ENCODE measurements at regions of chrX and their contacts with region 1.

Region 1: DNA sequence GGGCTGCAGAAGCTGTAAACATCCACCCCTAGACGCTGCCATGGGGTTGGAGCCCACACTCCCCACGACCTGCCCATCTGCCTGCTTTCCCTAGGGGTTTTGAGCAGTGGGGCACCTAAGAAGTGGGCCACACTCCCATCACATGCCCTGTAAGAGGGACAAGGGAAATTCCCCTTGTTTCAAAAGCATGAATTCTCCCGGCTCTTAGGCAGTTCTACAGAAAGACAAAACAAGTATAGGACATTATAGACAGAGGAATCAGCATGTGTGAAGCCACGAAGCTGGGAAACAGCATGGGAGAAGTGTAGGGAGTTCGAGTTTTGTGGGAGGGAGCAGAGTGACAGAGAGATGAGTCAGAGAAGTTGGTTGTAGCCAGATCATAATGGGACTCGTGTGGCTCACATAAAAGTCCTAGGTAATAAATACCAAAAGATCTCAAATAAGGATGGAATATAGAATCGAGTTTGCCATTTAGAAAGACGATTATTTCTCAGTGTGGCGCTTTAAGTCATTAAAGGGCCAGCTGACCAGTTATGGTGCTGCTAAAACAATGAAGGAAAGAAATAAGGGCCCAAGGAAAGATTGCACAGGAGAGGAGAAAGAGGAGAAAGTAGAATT is 23.9 kb downstream of the APOO start:
- ATAC-seq: peak; percentile 34 to 99 (median 78)
- H3K4me3 ChIP-seq: no peak overlapping the region
- H3K27ac ChIP-seq: no peak overlapping the region
- H3K4me1 ChIP-seq: no peaks in the 10 kb centered on the region

Region 2: DNA sequence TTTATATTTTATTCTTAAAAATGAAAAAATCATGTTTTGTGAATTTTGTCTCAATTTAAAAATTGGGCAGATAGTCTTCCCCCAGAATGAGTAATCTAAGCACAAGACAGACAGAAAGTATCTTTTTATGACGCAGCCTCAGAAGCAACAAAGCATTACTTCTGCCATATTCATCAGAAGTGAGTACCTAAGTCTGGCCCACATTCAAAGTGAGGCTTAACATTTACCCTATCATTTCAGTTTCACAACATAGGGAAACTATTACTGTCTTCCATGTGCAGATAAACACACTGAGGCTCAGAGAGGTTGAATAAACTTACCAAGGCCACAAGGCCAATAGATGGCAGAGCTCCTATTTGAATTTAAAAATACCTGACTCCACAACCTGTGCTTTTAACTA is 221.0 kb before region 1 on chrX:
- in situ Hi-C with region 1: no loop called
- ATAC-seq: no peak
- H3K4me3 ChIP-seq: no peak overlapping the region
- H3K27ac ChIP-seq: no peak overlapping the region
- H3K4me1 ChIP-seq: peaks cover 6% of the 10 kb centered on the region in 2 donors

Region 3: DNA sequence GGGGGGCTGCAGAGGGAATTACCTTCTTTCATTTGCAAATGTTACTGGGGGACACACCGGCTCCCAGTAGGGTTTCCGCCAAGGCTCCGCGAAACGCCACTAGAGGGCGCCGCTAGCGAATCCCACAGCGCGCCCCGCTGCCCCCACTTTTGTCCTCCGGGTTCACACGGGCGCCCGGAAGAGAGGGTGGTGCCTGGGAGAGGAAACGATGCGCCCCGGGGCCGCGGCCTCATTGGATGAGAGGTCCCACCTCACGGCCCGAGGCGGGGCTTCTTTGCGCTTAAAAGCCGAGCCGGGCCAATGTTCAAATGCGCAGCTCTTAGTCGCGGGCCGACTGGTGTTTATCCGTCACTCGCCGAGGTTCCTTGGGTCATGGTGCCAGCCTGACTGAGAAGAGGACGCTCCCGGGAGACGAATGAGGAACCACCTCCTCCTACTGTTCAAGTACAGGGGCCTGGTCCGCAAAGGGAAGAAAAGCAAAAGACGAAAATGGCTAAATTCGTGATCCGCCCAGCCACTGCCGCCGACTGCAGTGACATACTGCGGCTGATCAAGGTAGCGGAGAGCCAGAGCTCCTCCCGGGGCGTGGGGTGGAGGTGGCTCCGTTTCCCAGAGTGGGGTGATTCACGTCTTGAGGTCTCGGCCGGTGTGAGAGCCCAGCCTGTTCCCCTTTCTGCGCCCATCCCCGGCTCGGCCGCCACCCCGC is 100.8 kb before region 1 on chrX and contains the start of gene SAT1:
- in situ Hi-C with region 1: loop called in 3 of 9 experiments (anchors 25 kb)
- ATAC-seq: peak; percentile 70 to 99 (median 98)
- H3K4me3 ChIP-seq: peak within 1 kb of the TSS; percentile 50 to 73 (median 67)
- H3K27ac ChIP-seq: no peak within 1 kb of the TSS
- H3K4me1 ChIP-seq: no peaks in the 10 kb centered on the region
- total RNA-seq, gene SAT1: 13.3 to 269 (median 89.1) TPM

Region 4: GRCh38 chrX:24014388-24015018 is 130.7 kb after region 1 on chrX:
- in situ Hi-C with region 1: no loop called
- ATAC-seq: no peak
- H3K4me3 ChIP-seq: no peak overlapping the region
- H3K27ac ChIP-seq: no peak overlapping the region
- H3K4me1 ChIP-seq: no peaks in the 10 kb centered on the region